Left lung (tissue), 14 donors: ENCODE measurements at regions of chr5 and their contacts with region 1.

Region 1: GRCh38 chr5:126780165-126780827 is 3.4 kb downstream of the LMNB1 start:
- DNase-seq: peak in 2 of 4 donors; percentile 48 to 68
- ATAC-seq: no peak
- H3K4me3 ChIP-seq: no peak overlapping the region
- H3K27ac ChIP-seq: no peak overlapping the region
- H3K4me1 ChIP-seq: peaks cover 3 to 34% of the 10 kb centered on the region in 2 donors
- H3K27me3 ChIP-seq: no peaks in the 10 kb centered on the region
- CTCF ChIP-seq: peak; percentile 50 to 64

Region 2: DNA sequence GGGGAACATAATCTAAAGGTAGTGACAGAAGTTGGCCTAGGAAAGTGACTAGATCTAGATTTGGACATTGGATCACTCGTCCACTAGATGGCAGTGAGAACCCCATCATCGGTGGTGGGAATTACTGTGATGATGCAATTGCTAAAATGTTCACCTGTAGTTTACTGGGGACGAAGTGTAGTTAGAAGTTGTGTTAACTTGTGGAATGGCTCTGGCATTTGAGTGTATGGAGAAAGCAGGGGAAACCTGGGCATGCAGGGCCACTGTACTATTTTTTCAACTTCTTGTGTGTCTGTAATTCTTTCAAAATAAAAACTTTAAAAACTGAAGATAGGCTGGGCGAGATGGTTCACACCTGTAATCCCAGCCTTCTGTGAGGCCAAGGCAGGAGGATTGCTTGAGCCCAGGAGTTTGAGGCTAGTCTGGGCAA is 104.1 kb before region 1 on chr5:
- intact Hi-C with region 1: loop called in 1 of 2 experiments (anchors 5 kb)
- DNase-seq: peak in 2 of 4 donors; percentile 53 to 70
- ATAC-seq: peak; percentile 96
- H3K4me3 ChIP-seq: no peak overlapping the region
- H3K27ac ChIP-seq: no peak overlapping the region
- H3K4me1 ChIP-seq: peaks cover 0 to 8% of the 10 kb centered on the region in 2 donors
- H3K27me3 ChIP-seq: no peaks in the 10 kb centered on the region
- CTCF ChIP-seq: peak; percentile 63 to 82

Region 3: GRCh38 chr5:126998201-126998631 is 217.9 kb after region 1 on chr5:
- intact Hi-C with region 1: no loop called
- DNase-seq: no peak
- ATAC-seq: no peak
- H3K4me3 ChIP-seq: no peak overlapping the region
- H3K27ac ChIP-seq: no peak overlapping the region
- H3K4me1 ChIP-seq: no peaks in the 10 kb centered on the region
- H3K27me3 ChIP-seq: no peaks in the 10 kb centered on the region
- CTCF ChIP-seq: no peak